Activated T-helper 2 cell treated with anti-CD3 and anti-CD28 coated beads, Interferon-gamma antibody, Interleukin-2, Interleukin-4, amounts not matched to agents 10 μg/mL and 5 μg/mL and 100 μg/mL, durations not matched to agents 14 hours and 24 hours and 36 hours (primary cell): ENCODE measurements at regions of chr6 and their contacts with region 1.

Region 1: GRCh38 chr6:34392497-34393190 is at the start of gene NUDT3:
- DNase-seq: peak; percentile 92
- H3K4me3 Mint-ChIP-seq: peak within 1 kb of the TSS; percentile 86
- H3K27ac Mint-ChIP-seq: peak within 1 kb of the TSS; percentile 68
- H3K4me1 Mint-ChIP-seq: peaks cover 6% of the 10 kb centered on the region
- H3K27me3 Mint-ChIP-seq: no peaks in the 10 kb centered on the region
- total RNA-seq, gene NUDT3: 21.3 and 21.7 TPM in 2 replicates

Region 2: DNA sequence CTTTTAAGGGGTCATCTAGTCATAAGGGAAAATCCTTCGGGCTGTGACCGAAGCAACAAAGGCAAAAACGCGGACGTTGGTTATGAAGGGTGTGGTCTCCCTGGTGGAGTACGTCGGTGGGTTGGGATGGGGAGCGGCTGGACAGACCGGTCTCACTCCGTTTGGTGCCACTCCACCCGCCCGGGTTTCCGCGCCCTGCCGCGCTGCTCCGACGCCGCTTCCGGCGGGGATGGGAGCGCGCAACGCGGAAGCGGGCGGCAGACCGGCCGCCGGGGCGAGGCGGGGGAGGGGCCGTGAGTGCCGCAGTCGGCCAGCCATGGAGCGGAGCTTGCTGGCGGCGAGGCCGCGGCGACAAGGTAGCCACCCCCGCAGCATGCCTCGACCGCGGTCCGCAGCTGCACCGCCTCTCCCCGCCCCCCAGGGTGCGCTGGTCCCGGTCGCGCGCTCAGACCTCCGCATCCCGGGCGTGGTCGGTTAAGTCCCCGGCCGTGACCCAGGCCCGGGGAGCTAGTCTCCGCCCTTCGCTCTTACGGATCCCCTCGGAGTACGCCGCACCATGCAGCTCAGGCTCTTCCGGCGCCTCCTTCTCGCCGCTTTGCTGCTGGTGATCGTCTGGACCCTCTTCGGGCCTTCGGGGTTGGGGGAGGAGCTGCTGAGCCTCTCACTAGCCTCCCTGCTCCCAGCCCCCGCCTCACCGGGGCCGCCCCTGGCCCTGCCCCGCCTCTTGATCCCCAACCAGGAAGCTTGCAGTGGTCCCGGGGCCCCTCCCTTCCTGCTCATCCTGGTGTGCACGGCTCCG is 1115.6 kb before region 1 on chr6 and contains the start of gene B3GALT4:
- intact Hi-C with region 1: loop called (anchors 5 kb)
- DNase-seq: peak; percentile 73
- H3K4me3 Mint-ChIP-seq: peak within 1 kb of the TSS; percentile 98
- H3K27ac Mint-ChIP-seq: peak within 1 kb of the TSS; percentile 89
- H3K4me1 Mint-ChIP-seq: peaks cover 35% of the 10 kb centered on the region
- H3K27me3 Mint-ChIP-seq: no peaks in the 10 kb centered on the region
- total RNA-seq, gene B3GALT4: 5.1 and 6.5 TPM in 2 replicates

Region 3: GRCh38 chr6:34425498-34426410 is 33.1 kb after region 1 on chr6 and contains the start of gene RPS10:
- intact Hi-C with region 1: loop called (anchors 1 kb)
- DNase-seq: peak; percentile 86
- H3K4me3 Mint-ChIP-seq: peak within 1 kb of the TSS; percentile 98
- H3K27ac Mint-ChIP-seq: peak within 1 kb of the TSS; percentile 98
- H3K4me1 Mint-ChIP-seq: peaks cover 24% of the 10 kb centered on the region
- H3K27me3 Mint-ChIP-seq: peaks cover 3% of the 10 kb centered on the region
- total RNA-seq, gene RPS10: 1,642 and 1,684 TPM in 2 replicates